ENCODE measurements at regions of chr7 and their contacts with region 1.

Region 1: GRCh38 chr7:14691597-14692203 is 210.9 kb downstream of the DGKB start:
- DNase-seq: peak; percentile 4
- H3K4me3 ChIP-seq: no peak overlapping the region
- H3K27ac ChIP-seq: no peak overlapping the region
- H3K27me3 ChIP-seq: no peaks in the 10 kb centered on the region
- CTCF ChIP-seq: peak; percentile 89

Region 2: GRCh38 chr7:13279854-13280435 is 1411.8 kb before region 1 on chr7:
- CTCF ChIA-PET with region 1: interaction called, 334 read pairs
- POLR2A ChIA-PET with region 1: no interaction called
- DNase-seq: peak; percentile 3
- H3K4me3 ChIP-seq: no peak overlapping the region
- H3K27ac ChIP-seq: no peak overlapping the region
- H3K27me3 ChIP-seq: no peaks in the 10 kb centered on the region
- CTCF ChIP-seq: peak; percentile 33

Region 3: DNA sequence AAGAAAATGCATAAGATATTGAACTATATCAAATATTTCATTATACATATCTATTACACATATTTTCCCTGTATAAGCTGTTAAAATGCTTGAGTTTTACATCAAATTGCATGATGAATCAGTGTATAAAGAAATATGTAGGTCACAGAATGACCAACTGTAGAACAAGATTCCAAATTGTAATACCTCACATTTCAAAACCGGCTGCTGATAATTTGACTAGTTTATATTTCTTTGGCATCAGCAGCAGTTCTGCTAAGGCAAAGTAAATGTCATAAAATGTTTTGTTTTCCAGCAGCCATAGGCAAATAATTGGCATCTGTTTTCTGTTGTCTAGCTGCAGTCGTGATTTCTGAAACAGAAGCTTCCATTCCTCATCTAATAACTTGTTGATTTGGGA is 1370.4 kb before region 1 on chr7:
- CTCF ChIA-PET with region 1: interaction called, 19 read pairs
- POLR2A ChIA-PET with region 1: no interaction called
- DNase-seq: no peak
- H3K4me3 ChIP-seq: no peak overlapping the region
- H3K27ac ChIP-seq: no peak overlapping the region
- H3K27me3 ChIP-seq: no peaks in the 10 kb centered on the region
- CTCF ChIP-seq: no peak

Region 4: GRCh38 chr7:13532028-13532753 is 1159.5 kb before region 1 on chr7:
- CTCF ChIA-PET with region 1: interaction called, 16 read pairs
- POLR2A ChIA-PET with region 1: no interaction called
- DNase-seq: no peak
- H3K4me3 ChIP-seq: no peak overlapping the region
- H3K27ac ChIP-seq: no peak overlapping the region
- H3K27me3 ChIP-seq: no peaks in the 10 kb centered on the region
- CTCF ChIP-seq: no peak

Region 5: GRCh38 chr7:13778967-13779366 is 912.7 kb before region 1 on chr7:
- CTCF ChIA-PET with region 1: interaction called, 10 read pairs
- POLR2A ChIA-PET with region 1: no interaction called
- DNase-seq: no peak
- H3K4me3 ChIP-seq: no peak overlapping the region
- H3K27ac ChIP-seq: no peak overlapping the region
- H3K27me3 ChIP-seq: no peaks in the 10 kb centered on the region
- CTCF ChIP-seq: no peak

Region 6: DNA sequence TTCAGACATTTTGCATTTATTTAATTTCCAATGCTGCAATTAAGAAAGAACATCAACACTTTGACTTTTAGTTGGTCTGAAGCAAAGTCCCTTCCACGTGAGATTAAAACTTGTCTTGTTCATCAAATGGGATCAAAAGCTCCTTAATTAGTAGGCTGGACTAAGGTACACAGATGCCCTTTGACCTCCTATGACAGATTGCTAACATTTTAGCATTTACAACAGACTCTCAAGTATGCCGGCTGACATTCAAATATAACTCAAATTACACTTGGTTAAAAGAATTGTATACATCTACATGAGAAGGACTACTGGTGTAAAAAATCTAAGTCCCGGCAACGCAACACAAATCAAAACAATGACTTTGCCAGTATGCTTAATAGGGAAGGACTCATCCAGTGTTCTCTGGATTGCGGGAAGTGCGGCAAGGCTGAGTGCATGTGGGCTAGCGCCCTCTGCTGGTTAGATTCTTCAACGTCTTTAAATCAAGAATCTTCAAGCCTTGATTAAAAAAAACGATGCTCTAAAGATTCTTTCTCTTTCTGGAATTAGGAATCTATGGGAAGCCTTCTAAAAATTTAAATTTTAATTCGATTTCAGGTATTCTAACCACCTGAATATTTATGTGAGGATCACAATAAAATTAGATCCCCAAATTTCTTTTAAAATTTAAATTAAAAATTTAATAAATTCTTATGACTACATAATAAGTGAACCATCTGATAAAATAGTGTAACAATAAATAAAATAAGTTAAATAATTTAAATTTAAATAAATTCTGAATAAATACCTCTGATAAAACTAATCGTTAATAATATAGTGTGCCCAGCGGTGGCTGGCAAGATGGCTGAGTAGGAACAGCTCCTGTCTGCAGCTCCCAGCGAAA is 233.9 kb before region 1 on chr7:
- CTCF ChIA-PET with region 1: interaction called, 25 read pairs
- POLR2A ChIA-PET with region 1: no interaction called
- DNase-seq: peak; percentile 70
- H3K4me3 ChIP-seq: no peak overlapping the region
- H3K27ac ChIP-seq: no peak overlapping the region
- H3K27me3 ChIP-seq: no peaks in the 10 kb centered on the region
- CTCF ChIP-seq: peak; percentile 92

Region 7: DNA sequence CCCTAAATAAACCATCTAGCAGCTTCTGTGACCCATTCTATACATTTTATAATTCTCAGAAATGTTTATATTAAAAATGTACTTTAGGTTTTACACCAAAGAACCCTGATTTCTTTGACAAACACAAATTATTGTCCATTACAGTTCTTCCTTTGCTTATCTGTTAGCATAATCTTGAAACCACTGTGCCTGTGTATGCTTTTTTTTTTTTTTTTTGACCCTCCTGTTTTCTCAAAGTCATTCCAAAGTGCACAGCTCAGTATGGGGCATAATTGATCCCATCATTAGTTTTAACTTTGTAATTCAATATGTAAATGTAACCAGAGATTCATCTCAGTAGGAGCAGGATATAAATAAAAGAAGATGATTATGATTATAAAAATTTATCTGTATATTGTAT is 18.5 kb before region 1 on chr7:
- CTCF ChIA-PET with region 1: interaction called, 46 read pairs
- POLR2A ChIA-PET with region 1: no interaction called
- DNase-seq: no peak
- H3K4me3 ChIP-seq: no peak overlapping the region
- H3K27ac ChIP-seq: no peak overlapping the region
- H3K27me3 ChIP-seq: no peaks in the 10 kb centered on the region
- CTCF ChIP-seq: no peak

Region 8: DNA sequence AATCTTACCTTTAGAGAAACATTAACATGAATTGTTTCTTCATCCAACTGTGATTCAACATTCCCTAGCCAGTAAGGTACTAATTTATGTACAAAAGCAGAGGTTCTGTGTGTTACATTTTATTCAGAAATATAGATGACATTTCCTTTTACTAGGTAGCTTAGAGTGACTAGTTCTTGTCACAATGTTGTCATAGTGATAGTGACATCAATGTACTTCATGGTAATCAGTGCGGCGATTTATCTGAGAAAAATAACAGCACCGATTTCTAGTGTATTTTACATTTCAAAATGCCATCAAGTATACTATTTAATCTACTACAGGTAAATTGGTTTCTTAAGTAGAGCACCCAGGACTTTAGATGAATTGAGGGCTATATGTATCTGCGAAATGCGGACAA is 283.0 kb after region 1 on chr7:
- CTCF ChIA-PET with region 1: no interaction called
- POLR2A ChIA-PET with region 1: no interaction called
- DNase-seq: no peak
- H3K4me3 ChIP-seq: no peak overlapping the region
- H3K27ac ChIP-seq: no peak overlapping the region
- H3K27me3 ChIP-seq: no peaks in the 10 kb centered on the region
- CTCF ChIP-seq: no peak

Measured in AG04450 (cell line).